ENCODE measurements at regions of chr1 and their contacts with region 1.

Region 1: DNA sequence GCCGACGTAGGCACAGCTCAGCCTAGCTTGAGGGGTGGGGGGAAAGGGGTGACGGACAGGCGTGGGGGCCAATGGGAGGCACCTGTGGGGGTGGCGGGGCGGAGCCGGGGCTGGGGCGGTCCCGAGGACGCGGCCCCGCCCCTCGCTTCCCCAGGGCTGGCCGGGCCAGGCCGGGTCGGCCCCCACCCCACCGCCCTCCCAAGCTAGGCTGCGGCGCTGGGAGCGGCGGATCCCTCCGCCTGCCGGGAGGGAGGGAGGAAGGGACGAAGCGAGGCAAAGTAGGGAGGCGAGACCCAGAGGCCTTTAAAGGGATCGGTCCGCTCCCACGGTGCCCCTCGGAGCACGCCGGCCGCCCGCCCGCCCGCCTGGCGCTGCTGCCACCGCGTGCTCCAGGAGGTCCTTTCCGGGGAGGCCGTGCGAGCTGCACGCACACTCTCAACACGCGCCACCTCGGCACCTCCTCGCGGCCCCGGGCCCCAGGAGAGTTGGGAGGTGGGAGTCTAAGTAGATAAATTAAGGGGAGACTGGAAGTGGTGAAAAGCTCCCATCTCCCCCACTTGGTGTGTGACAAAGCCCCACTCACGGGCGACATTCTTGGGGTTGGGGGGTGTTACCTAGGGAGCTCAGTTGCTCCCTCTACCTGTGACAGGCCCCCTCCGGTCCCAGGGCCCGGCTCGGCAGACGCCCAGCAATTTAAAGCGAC is 373 bp upstream of the MEF2D start:
- DNase-seq: peak; percentile 90 to 97 (median 94)
- ATAC-seq: peak; percentile 63
- H3K4me3 ChIP-seq: peak overlapping the region; percentile 98
- H3K4me3 Mint-ChIP-seq: peak overlapping the region; percentile 97
- H3K27ac ChIP-seq: peak overlapping the region; percentile 96
- H3K27ac Mint-ChIP-seq: peak overlapping the region; percentile 97
- H3K4me1 ChIP-seq: peaks cover 84% of the 10 kb centered on the region
- H3K4me1 Mint-ChIP-seq: peaks cover 82% of the 10 kb centered on the region
- H3K27me3 ChIP-seq: no peaks in the 10 kb centered on the region
- H3K27me3 Mint-ChIP-seq: no peaks in the 10 kb centered on the region
- CTCF ChIP-seq: peak; percentile 74

Region 2: GRCh38 chr1:156282479-156283222 is 218.3 kb before region 1 on chr1 and contains the start of gene SMG5:
- CTCF ChIA-PET with region 1: no interaction called
- POLR2A ChIA-PET with region 1: interaction called, 12 read pairs
- intact Hi-C with region 1: no loop called
- DNase-seq: peak; percentile 90 to 99 (median 94)
- ATAC-seq: peak; percentile 94
- H3K4me3 ChIP-seq: peak within 1 kb of the TSS; percentile 79
- H3K4me3 Mint-ChIP-seq: peak within 1 kb of the TSS; percentile 97
- H3K27ac ChIP-seq: peak within 1 kb of the TSS; percentile 82
- H3K27ac Mint-ChIP-seq: peak within 1 kb of the TSS; percentile 86
- H3K4me1 ChIP-seq: peaks cover 36% of the 10 kb centered on the region
- H3K4me1 Mint-ChIP-seq: peaks cover 47% of the 10 kb centered on the region
- H3K27me3 ChIP-seq: no peaks in the 10 kb centered on the region
- H3K27me3 Mint-ChIP-seq: no peaks in the 10 kb centered on the region
- CTCF ChIP-seq: no peak
- total RNA-seq, gene SMG5: 51.6 to 56.1 TPM

Region 3: GRCh38 chr1:156480411-156481192 is 20.3 kb before region 1 on chr1:
- CTCF ChIA-PET with region 1: interaction called, 77 read pairs
- POLR2A ChIA-PET with region 1: interaction called, 145 read pairs
- intact Hi-C with region 1: loop called (anchors 1 kb)
- DNase-seq: peak; percentile 67 to 89 (median 77)
- ATAC-seq: peak; percentile 86
- H3K4me3 ChIP-seq: no peak overlapping the region
- H3K4me3 Mint-ChIP-seq: peak overlapping the region; percentile 42
- H3K27ac ChIP-seq: peak overlapping the region; percentile 52 to 62
- H3K27ac Mint-ChIP-seq: peak overlapping the region; percentile 94
- H3K4me1 ChIP-seq: peaks cover 47% of the 10 kb centered on the region
- H3K4me1 Mint-ChIP-seq: peaks cover 53% of the 10 kb centered on the region
- H3K27me3 ChIP-seq: no peaks in the 10 kb centered on the region
- H3K27me3 Mint-ChIP-seq: no peaks in the 10 kb centered on the region
- CTCF ChIP-seq: peak; percentile 75

Region 4: DNA sequence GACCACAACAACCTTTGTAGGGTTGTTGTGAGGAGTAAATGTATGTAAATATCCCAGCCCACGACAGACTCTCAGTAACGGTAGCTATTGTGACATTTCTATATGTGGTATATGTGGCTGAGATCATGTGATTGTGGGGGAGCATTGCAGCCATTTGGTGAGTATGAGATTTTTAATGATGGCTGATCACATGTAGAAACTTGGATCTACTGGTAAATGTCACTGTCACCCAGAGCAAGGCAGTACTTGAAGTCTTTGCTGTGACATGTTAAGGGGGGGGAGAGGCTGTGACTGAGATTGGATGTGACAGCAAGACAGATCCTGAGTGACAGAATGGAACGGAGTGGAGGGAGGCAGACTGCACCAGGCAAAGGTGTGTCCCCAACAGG is 23.5 kb after region 1 on chr1:
- CTCF ChIA-PET with region 1: interaction called, 9 read pairs
- POLR2A ChIA-PET with region 1: interaction called, 32 read pairs
- intact Hi-C with region 1: loop called in 1 of 2 experiments (anchors 2 kb)
- DNase-seq: peak in 3 of 14 experiments; percentile 47 to 53 (median 49)
- ATAC-seq: peak; percentile 71
- H3K4me3 ChIP-seq: no peak overlapping the region
- H3K4me3 Mint-ChIP-seq: peak overlapping the region; percentile 62
- H3K27ac ChIP-seq: no peak overlapping the region
- H3K27ac Mint-ChIP-seq: peak overlapping the region; percentile 6
- H3K4me1 ChIP-seq: peaks cover 33% of the 10 kb centered on the region
- H3K4me1 Mint-ChIP-seq: peaks cover 38% of the 10 kb centered on the region
- H3K27me3 ChIP-seq: no peaks in the 10 kb centered on the region
- H3K27me3 Mint-ChIP-seq: no peaks in the 10 kb centered on the region
- CTCF ChIP-seq: no peak

Region 5: DNA sequence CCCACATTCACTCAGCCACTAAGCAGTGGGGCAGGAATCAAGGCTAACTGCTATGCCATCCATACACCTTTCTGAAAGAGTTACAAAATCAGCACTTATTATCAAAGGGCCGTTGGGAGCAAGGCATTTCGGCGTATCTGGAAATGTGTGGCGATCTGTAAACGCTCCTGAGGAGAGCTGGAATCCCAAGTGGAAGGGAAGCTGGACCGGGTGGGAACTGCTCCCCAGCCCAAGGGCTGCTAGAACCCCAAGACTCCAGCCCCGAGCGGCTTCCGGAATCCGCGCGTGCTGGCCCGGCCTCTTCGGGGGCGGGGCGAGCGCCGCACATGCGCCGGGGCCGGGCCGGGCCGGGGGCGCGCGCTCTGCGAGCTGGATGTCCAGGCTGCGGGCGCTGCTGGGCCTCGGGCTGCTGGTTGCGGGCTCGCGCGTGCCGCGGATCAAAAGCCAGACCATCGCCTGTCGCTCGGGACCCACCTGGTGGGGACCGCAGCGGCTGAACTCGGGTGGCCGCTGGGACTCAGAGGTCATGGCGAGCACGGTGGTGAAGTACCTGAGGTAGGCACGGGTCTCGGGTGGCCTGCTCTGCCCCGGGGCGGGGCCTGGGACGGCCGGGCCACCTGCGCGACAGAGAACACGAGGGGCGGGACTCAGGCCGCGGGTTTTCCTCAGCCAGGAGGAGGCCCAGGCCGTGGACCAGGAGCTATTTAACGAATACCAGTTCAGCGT is 90.6 kb after region 1 on chr1 and contains the start of gene NAXE:
- CTCF ChIA-PET with region 1: interaction called, 6 read pairs
- POLR2A ChIA-PET with region 1: interaction called, 36 read pairs
- intact Hi-C with region 1: no loop called
- DNase-seq: peak; percentile 43 to 87 (median 66)
- ATAC-seq: peak; percentile 96
- H3K4me3 ChIP-seq: peak within 1 kb of the TSS; percentile 78
- H3K4me3 Mint-ChIP-seq: peak within 1 kb of the TSS; percentile 90
- H3K27ac ChIP-seq: peak within 1 kb of the TSS; percentile 37 to 40
- H3K27ac Mint-ChIP-seq: peak within 1 kb of the TSS; percentile 89
- H3K4me1 ChIP-seq: peaks cover 26% of the 10 kb centered on the region
- H3K4me1 Mint-ChIP-seq: peaks cover 28% of the 10 kb centered on the region
- H3K27me3 ChIP-seq: no peaks in the 10 kb centered on the region
- H3K27me3 Mint-ChIP-seq: no peaks in the 10 kb centered on the region
- CTCF ChIP-seq: no peak
- total RNA-seq, gene NAXE: 23.3 to 27.8 TPM

Region 6: GRCh38 chr1:156767101-156767878 is 266.3 kb after region 1 on chr1 and contains the start of gene PRCC:
- CTCF ChIA-PET with region 1: no interaction called
- POLR2A ChIA-PET with region 1: interaction called, 9 read pairs
- intact Hi-C with region 1: loop called in 1 of 2 experiments (anchors 10 kb)
- DNase-seq: peak; percentile 91 to 100 (median 96)
- ATAC-seq: peak; percentile 88
- H3K4me3 ChIP-seq: peak within 1 kb of the TSS; percentile 87
- H3K4me3 Mint-ChIP-seq: no peak within 1 kb of the TSS
- H3K27ac ChIP-seq: peak within 1 kb of the TSS; percentile 96
- H3K27ac Mint-ChIP-seq: no peak within 1 kb of the TSS
- H3K4me1 ChIP-seq: peaks cover 42% of the 10 kb centered on the region
- H3K4me1 Mint-ChIP-seq: peaks cover 37% of the 10 kb centered on the region
- H3K27me3 ChIP-seq: no peaks in the 10 kb centered on the region
- H3K27me3 Mint-ChIP-seq: no peaks in the 10 kb centered on the region
- CTCF ChIP-seq: no peak
- total RNA-seq, gene PRCC: 49.5 to 50.0 TPM

Region 7: DNA sequence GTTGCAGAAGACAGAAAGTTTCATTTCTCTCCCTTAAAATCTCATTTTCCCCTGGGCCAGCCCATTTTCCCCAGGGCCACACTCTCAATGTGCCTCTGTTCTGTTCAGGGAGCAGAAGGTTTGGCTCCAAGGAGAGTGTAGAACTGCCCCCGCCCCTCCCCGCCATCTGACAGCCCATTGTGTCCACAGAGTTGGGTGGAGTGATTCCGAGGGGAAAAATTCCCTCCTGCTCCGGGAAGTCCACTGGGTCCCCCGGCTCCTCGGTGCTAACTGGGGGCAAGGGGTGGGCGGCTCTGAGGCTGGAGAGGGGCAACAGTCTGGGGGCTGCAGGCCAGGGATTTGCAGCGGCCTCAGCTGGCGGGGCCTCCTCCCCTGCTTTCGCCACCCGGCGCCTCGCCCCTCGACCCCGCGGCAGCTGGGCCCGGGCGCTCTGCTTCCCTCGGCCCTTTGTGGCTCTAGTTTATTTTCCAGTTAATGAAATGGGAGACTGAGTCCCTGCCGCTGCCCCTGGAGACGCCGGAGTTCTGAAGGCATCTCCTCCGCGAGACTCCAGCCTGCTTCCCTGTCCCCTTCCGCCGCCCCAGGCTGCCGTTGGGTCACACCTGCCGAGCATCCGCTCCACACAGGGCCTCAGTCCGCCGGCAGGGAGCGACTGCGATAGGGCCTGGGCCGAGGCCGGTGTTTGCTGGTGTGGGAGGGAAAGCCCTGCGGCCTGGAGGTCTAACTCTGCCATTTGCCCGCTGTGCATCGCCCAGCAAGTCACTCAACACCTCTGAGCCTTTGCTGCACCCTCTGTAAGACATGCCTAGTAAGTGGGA is 1477.8 kb after region 1 on chr1:
- CTCF ChIA-PET with region 1: no interaction called
- POLR2A ChIA-PET with region 1: no interaction called
- intact Hi-C with region 1: no loop called
- DNase-seq: no peak
- ATAC-seq: no peak
- H3K4me3 ChIP-seq: no peak overlapping the region
- H3K4me3 Mint-ChIP-seq: no peak overlapping the region
- H3K27ac ChIP-seq: no peak overlapping the region
- H3K27ac Mint-ChIP-seq: no peak overlapping the region
- H3K4me1 ChIP-seq: no peaks in the 10 kb centered on the region
- H3K4me1 Mint-ChIP-seq: no peaks in the 10 kb centered on the region
- H3K27me3 ChIP-seq: peaks cover 0 to 3% of the 10 kb centered on the region in 2 experiments
- H3K27me3 Mint-ChIP-seq: peaks cover 31% of the 10 kb centered on the region
- CTCF ChIP-seq: no peak